Heart right ventricle (tissue), 16 donors: ENCODE measurements at regions of chr1 and their contacts with region 1.

Region 1: GRCh38 chr1:94801919-94802546 is 18.1 kb upstream of the SLC44A3 start:
- DNase-seq: peak; percentile 21 to 23
- ATAC-seq: peak; percentile 74 to 89 (median 84)
- H3K4me3 ChIP-seq: peak overlapping the region in 5 of 10 donors; percentile 4 to 31 (median 24)
- H3K27ac ChIP-seq: peak overlapping the region in 9 of 10 donors; percentile 24 to 78 (median 66)
- H3K4me1 ChIP-seq: peaks cover 3 to 60% (median 36%) of the 10 kb centered on the region in 9 donors
- H3K27me3 ChIP-seq: no peaks in the 10 kb centered on the region
- CTCF ChIP-seq: peak in 8 of 9 donors; percentile 18 to 73 (median 61)

Region 2: DNA sequence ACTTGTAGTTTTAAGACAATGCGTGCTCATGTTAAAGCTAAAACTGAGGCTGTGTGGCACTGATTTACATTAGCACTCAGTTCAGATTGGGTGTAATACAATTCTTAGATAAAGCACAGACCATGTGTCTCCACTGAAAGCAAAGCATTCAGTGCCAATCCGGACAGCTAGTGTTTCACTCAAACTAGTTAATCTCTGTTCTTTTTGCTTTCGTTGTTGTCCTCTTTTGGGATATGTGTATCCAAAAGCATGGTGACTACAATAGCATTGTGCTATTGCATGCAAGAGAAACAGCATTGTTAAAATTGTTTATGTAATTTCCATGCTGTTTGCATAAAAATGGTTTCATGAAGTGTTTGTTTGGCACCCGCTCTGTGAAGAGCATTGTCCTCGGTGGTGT is 315.0 kb before region 1 on chr1:
- intact Hi-C with region 1: loop called in 7 of 10 experiments (anchors 2 to 10 kb)
- DNase-seq: no peak
- ATAC-seq: no peak
- H3K4me3 ChIP-seq: no peak overlapping the region
- H3K27ac ChIP-seq: no peak overlapping the region
- H3K4me1 ChIP-seq: peaks cover 0 to 7% (median 0%) of the 10 kb centered on the region in 9 donors
- H3K27me3 ChIP-seq: no peaks in the 10 kb centered on the region
- CTCF ChIP-seq: no peak

Region 3: DNA sequence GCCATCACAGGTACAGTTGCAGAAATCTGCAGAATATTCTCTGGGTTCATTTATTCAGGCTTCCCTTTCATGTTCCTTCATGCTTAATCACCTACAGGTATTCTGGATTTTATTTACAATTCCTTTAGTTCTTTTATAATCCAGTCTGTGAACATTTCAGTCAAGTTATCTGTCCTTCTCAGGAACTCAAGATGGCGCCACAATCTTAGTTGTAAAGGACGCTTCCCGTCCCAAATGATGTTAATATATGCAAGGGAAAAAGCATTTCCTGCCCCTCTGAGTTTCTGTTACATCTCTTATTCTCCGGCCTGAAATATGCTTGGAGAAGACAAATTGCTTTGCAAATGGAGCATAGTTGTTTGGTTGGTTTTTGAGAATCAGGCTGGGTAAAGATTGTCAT is 279.7 kb before region 1 on chr1:
- intact Hi-C with region 1: loop called in 9 of 10 experiments (anchors 2 to 10 kb)
- DNase-seq: peak in 1 of 2 donors; percentile 35
- ATAC-seq: peak in 6 of 8 donors; percentile 43 to 72 (median 62)
- H3K4me3 ChIP-seq: no peak overlapping the region
- H3K27ac ChIP-seq: no peak overlapping the region
- H3K4me1 ChIP-seq: peaks cover 0 to under 1% (median 0%) of the 10 kb centered on the region in 9 donors
- H3K27me3 ChIP-seq: no peaks in the 10 kb centered on the region
- CTCF ChIP-seq: peak in 7 of 9 donors; percentile 40 to 73 (median 62)

Region 4: GRCh38 chr1:94541175-94542087 is 260.6 kb before region 1 on chr1 and contains the start of gene F3:
- intact Hi-C with region 1: loop called in 5 of 10 experiments (anchors 5 kb)
- DNase-seq: peak; percentile 89
- ATAC-seq: peak; percentile 92 to 96 (median 94)
- H3K4me3 ChIP-seq: peak within 1 kb of the TSS; percentile 45 to 80 (median 72)
- H3K27ac ChIP-seq: peak within 1 kb of the TSS; percentile 87 to 95 (median 90)
- H3K4me1 ChIP-seq: peaks cover 0 to 50% (median 32%) of the 10 kb centered on the region in 9 donors
- H3K27me3 ChIP-seq: peaks cover 0 to 12% (median 0%) of the 10 kb centered on the region in 7 donors
- CTCF ChIP-seq: peak in 2 of 9 donors; percentile 29 to 34
- total RNA-seq, gene F3: 20.4 to 99.0 (median 48.5) TPM

Region 5: GRCh38 chr1:94654031-94654430 is 148.0 kb before region 1 on chr1:
- intact Hi-C with region 1: loop called in 3 of 10 experiments (anchors 5 to 10 kb)
- DNase-seq: peak in 1 of 2 donors; percentile 18
- ATAC-seq: peak in 7 of 8 donors; percentile 2 to 42 (median 13)
- H3K4me3 ChIP-seq: no peak overlapping the region
- H3K27ac ChIP-seq: peak overlapping the region in 7 of 10 donors; percentile 18 to 75 (median 69)
- H3K4me1 ChIP-seq: peaks cover 0 to 30% (median 3%) of the 10 kb centered on the region in 9 donors
- H3K27me3 ChIP-seq: no peaks in the 10 kb centered on the region
- CTCF ChIP-seq: no peak

Region 6: DNA sequence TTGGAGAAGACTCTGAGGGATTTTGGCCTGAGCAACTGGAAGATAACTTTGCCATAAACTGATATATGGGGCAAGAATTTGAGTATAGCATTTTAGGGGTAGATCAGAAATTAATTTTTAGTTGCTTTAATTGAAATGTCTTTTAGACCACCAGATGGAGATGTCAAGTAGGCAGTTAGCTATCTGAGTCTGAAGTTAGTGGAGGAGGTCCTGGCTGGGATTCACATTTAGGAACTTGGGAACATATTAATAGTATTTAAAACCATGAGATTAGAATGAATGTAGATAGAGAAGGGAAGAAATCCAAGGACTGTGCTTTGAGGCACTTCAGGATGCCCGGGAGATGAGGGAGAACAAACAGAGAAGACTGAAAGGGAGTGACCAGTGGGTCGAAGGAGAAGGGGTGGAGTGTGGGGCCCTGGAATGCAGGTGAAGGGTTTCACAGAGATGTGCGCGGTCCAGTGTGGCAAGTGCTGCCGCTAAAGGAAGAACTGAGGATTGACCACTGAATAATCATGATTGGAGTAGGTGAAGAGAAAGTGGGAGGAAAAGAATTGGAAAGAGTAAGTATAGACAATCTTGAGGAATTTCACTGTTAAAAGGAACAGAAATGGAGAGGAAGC is 50.9 kb after region 1 on chr1:
- intact Hi-C with region 1: no loop called
- DNase-seq: no peak
- ATAC-seq: no peak
- H3K4me3 ChIP-seq: no peak overlapping the region
- H3K27ac ChIP-seq: peak overlapping the region in 1 of 10 donors; percentile 6
- H3K4me1 ChIP-seq: peaks cover 0 to 49% (median 15%) of the 10 kb centered on the region in 9 donors
- H3K27me3 ChIP-seq: no peaks in the 10 kb centered on the region
- CTCF ChIP-seq: peak in 4 of 9 donors; percentile 15 to 33 (median 29)